H1 (cell line): ENCODE measurements at regions of chr2 and their contacts with region 1.

Region 1: GRCh38 chr2:131673392-131674173 is 145.9 kb downstream of the CCDC74A start:
- DNase-seq: peak in 1 of 2 experiments; percentile 89
- H3K4me3 ChIP-seq: peak overlapping the region; percentile 8 to 59 (median 24); a peak in 5 of 8 replicates
- H3K27ac ChIP-seq: no peak overlapping the region
- H3K4me1 ChIP-seq: no peaks in the 10 kb centered on the region; a peak in 2 of 7 replicates
- H3K27me3 ChIP-seq: peaks cover 4 to 16% (median 11%) of the 10 kb centered on the region in 4 experiments
- CTCF ChIP-seq: peak; percentile 78 to 91 (median 86)
- EP300 ChIP-seq: no peak
- POLR2A ChIP-seq: no peak
- RAD21 ChIP-seq: peak; percentile 70 to 77

Region 2: DNA sequence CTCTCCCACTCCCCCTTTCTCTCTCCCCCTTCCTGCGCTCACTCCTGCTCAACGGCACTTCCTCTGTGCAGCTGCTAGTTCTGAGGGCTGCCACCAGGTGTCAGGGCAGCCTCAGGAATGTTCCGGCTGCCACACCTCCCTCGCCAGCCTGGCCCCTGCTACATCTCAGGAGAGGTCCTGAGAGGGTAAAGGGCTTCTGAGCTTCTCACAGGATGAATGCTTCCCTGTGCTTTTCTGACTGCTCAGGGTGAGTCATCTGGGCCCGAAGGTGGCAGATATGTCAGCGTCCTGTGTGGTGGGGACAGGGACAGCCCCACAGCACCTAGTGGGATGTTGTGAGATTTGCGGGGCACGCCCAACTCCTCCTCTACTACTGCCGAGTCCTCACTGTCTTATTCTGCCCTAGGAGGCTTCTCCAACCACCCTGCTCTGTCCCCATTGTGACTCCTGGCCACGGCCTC is 519.5 kb before region 1 on chr2:
- CTCF ChIA-PET with region 1: interaction called, 17 read pairs
- POLR2A ChIA-PET with region 1: no interaction called
- DNase-seq: peak in 1 of 2 experiments; percentile 71
- H3K4me3 ChIP-seq: no peak overlapping the region
- H3K27ac ChIP-seq: no peak overlapping the region
- H3K4me1 ChIP-seq: no peaks in the 10 kb centered on the region; a peak in 2 of 7 replicates
- H3K27me3 ChIP-seq: no peaks in the 10 kb centered on the region
- CTCF ChIP-seq: peak; percentile 91 to 96 (median 94)
- EP300 ChIP-seq: no peak
- POLR2A ChIP-seq: no peak
- RAD21 ChIP-seq: peak; percentile 99 to 100

Region 3: GRCh38 chr2:131754929-131755720 is 81.5 kb after region 1 on chr2:
- CTCF ChIA-PET with region 1: no interaction called
- POLR2A ChIA-PET with region 1: no interaction called
- DNase-seq: no peak
- H3K4me3 ChIP-seq: no peak overlapping the region
- H3K27ac ChIP-seq: no peak overlapping the region
- H3K4me1 ChIP-seq: no peaks in the 10 kb centered on the region
- H3K27me3 ChIP-seq: no peaks in the 10 kb centered on the region
- CTCF ChIP-seq: no peak
- EP300 ChIP-seq: no peak
- POLR2A ChIP-seq: no peak
- RAD21 ChIP-seq: no peak

Region 4: DNA sequence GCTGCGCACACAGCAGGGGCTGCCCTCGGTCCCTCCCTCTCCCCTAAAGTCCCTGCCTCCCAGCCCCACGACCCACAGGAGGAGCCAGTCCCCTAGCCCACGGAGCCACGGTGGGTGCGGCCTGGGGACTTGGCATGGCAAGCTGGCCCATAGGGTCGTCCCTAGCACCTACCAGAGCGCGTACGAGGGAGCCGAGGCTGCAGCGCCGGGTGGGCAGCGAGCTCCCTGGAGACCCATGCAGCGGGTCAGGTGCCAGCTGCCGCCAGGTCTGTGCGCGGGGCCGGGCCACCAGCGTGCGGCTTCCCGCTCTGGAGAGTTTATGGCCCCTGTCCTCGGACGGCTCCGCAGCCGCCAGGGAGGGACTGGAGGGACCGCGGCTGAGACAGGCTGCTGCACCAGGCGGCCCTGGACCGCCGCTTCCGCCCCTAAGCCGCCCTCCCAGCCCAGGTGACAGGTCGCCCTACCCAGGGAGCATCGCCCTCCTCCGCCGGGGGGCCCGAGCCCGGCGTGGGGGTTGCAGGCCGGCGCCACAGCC is 127.7 kb after region 1 on chr2:
- CTCF ChIA-PET with region 1: interaction called, 13 read pairs
- POLR2A ChIA-PET with region 1: no interaction called
- DNase-seq: peak in 1 of 2 experiments; percentile 47
- H3K4me3 ChIP-seq: peak overlapping the region in 1 of 4 experiments; percentile 60; a peak in 1 of 8 replicates
- H3K27ac ChIP-seq: no peak overlapping the region
- H3K4me1 ChIP-seq: no peaks in the 10 kb centered on the region
- H3K27me3 ChIP-seq: peaks cover 0 to 2% (median 0%) of the 10 kb centered on the region in 4 experiments; a peak in 2 of 7 replicates
- CTCF ChIP-seq: no peak
- EP300 ChIP-seq: no peak
- POLR2A ChIP-seq: no peak
- RAD21 ChIP-seq: no peak

Region 5: GRCh38 chr2:131827481-131828163 is 154.0 kb after region 1 on chr2:
- CTCF ChIA-PET with region 1: interaction called, 11 read pairs
- POLR2A ChIA-PET with region 1: no interaction called
- DNase-seq: no peak
- H3K4me3 ChIP-seq: no peak overlapping the region
- H3K27ac ChIP-seq: no peak overlapping the region
- H3K4me1 ChIP-seq: no peaks in the 10 kb centered on the region
- H3K27me3 ChIP-seq: no peaks in the 10 kb centered on the region
- CTCF ChIP-seq: peak in 1 of 3 experiments; percentile 13; a peak in 1 of 4 replicates
- EP300 ChIP-seq: no peak
- POLR2A ChIP-seq: no peak
- RAD21 ChIP-seq: peak in 1 of 2 experiments; percentile 2; a peak in 1 of 4 replicates